Natural killer cell (primary cell): ENCODE measurements at regions of chr5 and their contacts with region 1.

Region 1: DNA sequence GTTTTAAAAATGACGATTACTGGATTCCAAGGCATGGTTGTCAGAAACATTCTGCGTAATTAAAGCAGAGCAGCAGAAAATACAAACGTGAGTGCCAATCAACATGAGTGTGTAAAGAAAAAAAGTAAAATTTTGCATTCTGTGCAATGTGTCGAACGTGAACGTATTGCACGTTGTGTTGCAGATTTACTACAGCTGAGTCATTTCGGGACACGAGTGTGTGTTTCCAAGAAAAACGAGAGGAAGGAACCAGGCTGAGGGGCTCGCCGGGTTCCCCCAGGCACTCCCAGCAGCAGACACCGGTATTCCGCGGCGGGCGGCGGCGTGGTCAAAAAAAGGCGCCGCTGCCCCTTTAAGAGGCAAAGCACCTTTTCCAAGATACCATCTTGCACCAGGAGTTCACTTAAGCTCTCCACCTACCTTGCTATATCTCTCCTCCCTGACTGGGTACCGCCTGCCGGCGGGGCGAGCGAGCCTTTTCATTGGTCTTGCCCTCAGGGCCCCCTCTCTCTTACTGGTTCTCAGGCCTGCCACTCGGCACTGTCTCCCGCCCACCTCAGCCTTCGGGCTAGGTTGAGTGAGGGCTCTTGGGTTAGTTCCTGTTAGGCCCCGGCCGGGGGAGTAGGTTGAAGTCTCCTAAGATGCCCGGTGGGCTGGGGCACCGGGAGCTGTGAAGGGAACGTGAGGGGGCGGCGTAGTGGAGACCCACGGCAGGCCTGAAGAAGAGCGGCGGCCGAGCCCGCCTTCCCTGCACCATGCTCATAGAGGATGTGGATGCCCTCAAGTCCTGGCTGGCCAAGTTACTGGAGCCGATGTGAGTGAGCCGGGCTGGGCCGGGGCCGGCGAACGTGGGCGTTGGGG is at the start of gene RBM27:
- DNase-seq: peak; percentile 98
- ATAC-seq: peak; percentile 98 to 100 (median 99)
- H3K4me3 ChIP-seq: peak within 1 kb of the TSS; percentile 79
- H3K4me3 Mint-ChIP-seq: no peak within 1 kb of the TSS
- H3K27ac ChIP-seq: peak within 1 kb of the TSS; percentile 74
- H3K27ac Mint-ChIP-seq: no peak within 1 kb of the TSS
- H3K4me1 ChIP-seq: peaks cover 15% of the 10 kb centered on the region
- H3K4me1 Mint-ChIP-seq: no peaks in the 10 kb centered on the region
- H3K27me3 ChIP-seq: no peaks in the 10 kb centered on the region
- H3K27me3 Mint-ChIP-seq: peaks cover 0 to 9% of the 10 kb centered on the region in 2 donors
- CTCF ChIP-seq: no peak
- total RNA-seq, gene RBM27: 24.3 to 30.4 (median 26.2) TPM

Region 2: DNA sequence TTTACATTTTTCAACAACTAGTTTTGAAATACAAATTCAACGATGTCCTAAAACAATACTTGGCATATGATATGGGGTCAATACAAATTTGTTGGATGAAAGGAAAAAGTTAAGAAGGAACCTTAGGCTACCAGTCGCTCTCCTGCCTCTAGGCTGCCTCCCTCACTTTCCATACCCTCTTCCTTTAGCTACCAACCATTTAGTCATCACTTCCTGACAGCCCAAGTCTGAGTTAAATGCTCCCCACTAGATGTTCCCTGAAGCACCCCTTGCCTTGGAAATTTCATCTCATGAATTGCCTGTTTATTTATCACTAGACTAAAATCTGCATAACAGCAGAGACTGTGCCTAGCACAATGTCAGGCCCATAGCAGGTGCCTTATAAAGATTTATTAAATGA is 18.1 kb before region 1 on chr5:
- intact Hi-C with region 1: loop called (anchors 1 kb)
- DNase-seq: no peak
- ATAC-seq: no peak
- H3K4me3 ChIP-seq: no peak overlapping the region
- H3K4me3 Mint-ChIP-seq: peak overlapping the region; percentile 61
- H3K27ac ChIP-seq: no peak overlapping the region
- H3K27ac Mint-ChIP-seq: no peak overlapping the region
- H3K4me1 ChIP-seq: peaks cover 20% of the 10 kb centered on the region
- H3K4me1 Mint-ChIP-seq: peaks cover 8% of the 10 kb centered on the region in 2 donors
- H3K27me3 ChIP-seq: no peaks in the 10 kb centered on the region
- H3K27me3 Mint-ChIP-seq: peaks cover 9 to 11% of the 10 kb centered on the region in 2 donors
- CTCF ChIP-seq: no peak

Region 3: DNA sequence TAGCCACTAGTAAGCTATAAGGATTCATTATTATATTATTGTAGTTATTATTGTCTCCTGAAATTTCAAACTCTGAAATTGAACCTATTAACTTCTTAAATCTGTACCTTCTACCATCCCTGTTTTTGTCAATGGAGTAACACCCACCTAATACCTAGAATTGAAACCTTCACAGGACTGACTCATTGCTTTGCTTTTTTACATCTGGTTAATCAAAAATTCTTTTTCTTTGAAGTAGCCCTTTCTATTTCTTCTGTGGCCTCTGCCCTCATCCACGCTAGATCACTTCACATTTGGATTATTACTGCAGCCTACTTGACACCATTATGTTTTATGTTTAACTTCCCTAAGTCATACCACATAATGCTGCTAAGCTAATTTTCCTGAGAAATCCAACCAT is 35.7 kb after region 1 on chr5:
- intact Hi-C with region 1: no loop called
- DNase-seq: no peak
- ATAC-seq: no peak
- H3K4me3 ChIP-seq: no peak overlapping the region
- H3K4me3 Mint-ChIP-seq: no peak overlapping the region
- H3K27ac ChIP-seq: no peak overlapping the region
- H3K27ac Mint-ChIP-seq: peak overlapping the region; percentile 29 to 68
- H3K4me1 ChIP-seq: no peaks in the 10 kb centered on the region
- H3K4me1 Mint-ChIP-seq: peaks cover 5 to 10% of the 10 kb centered on the region in 2 donors
- H3K27me3 ChIP-seq: no peaks in the 10 kb centered on the region
- H3K27me3 Mint-ChIP-seq: no peaks in the 10 kb centered on the region
- CTCF ChIP-seq: no peak

Region 4: DNA sequence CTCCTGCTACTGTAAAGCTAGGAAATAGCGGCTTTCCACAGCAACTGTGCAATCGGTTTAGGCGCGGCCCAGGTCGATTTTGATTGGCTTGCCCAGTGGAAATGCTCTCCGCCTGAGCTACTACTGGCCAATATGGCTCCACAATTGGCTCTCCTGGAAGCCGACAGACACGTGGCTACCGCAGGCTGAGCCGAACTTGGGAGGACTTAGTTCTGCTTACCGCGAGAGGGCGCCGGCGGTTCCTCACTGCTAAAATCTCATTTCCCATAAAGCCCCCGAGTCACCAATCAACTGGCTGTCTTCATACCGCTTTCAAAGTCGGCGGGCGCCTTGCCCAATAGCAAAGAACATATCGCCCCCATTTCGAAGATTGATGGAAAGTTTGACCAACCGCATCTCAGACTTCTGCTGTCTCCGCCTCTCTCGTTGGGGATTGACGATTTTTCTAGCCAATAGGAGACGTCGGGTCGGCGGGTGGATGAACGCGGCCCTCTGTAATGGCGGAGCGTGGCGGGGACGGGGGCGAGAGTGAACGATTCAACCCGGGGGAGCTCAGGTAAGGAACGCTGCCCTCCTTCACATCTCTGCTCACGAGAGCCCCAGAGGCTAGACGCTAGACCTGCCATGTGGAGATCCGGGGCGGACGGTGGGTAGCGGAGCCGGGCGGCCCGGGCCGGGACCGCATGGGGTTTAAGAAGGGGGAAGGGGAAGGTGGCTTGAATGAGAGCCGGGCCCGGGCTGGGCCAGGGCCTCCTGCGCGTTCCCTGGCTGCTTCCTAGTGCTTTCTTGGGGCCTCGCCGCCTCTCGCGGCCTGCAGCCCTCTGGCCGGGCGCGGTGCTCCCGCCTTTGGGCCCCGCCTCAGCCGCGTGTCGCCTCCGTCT is 243.9 kb after region 1 on chr5 and contains the start of gene TCERG1:
- intact Hi-C with region 1: loop called (anchors 2 kb)
- DNase-seq: peak; percentile 95 to 99
- ATAC-seq: peak; percentile 90 to 95 (median 93)
- H3K4me3 ChIP-seq: peak within 1 kb of the TSS; percentile 90
- H3K4me3 Mint-ChIP-seq: peak within 1 kb of the TSS; percentile 99
- H3K27ac ChIP-seq: peak within 1 kb of the TSS; percentile 92
- H3K27ac Mint-ChIP-seq: peak within 1 kb of the TSS; percentile 93 to 95
- H3K4me1 ChIP-seq: peaks cover 13% of the 10 kb centered on the region
- H3K4me1 Mint-ChIP-seq: peaks cover 31 to 34% of the 10 kb centered on the region in 2 donors
- H3K27me3 ChIP-seq: no peaks in the 10 kb centered on the region
- H3K27me3 Mint-ChIP-seq: peaks cover 0 to 2% of the 10 kb centered on the region in 2 donors
- CTCF ChIP-seq: peak; percentile 80
- total RNA-seq, gene TCERG1: 77.5 to 97.0 (median 96.1) TPM